Lower lobe of right lung (tissue), 2 donors: ENCODE measurements at regions of chr10 and their contacts with region 1.

Region 1: GRCh38 chr10:3197348-3198003 is 24.9 kb upstream of the PITRM1 start:
- DNase-seq: peak; percentile 80
- ATAC-seq: peak; percentile 91 to 92
- H3K4me3 ChIP-seq: peak overlapping the region; percentile 18
- H3K27ac ChIP-seq: no peak overlapping the region
- H3K4me1 ChIP-seq: peaks cover 21% of the 10 kb centered on the region
- H3K27me3 ChIP-seq: no peaks in the 10 kb centered on the region
- CTCF ChIP-seq: peak; percentile 85

Region 2: GRCh38 chr10:3323865-3324498 is 126.5 kb after region 1 on chr10:
- intact Hi-C with region 1: no loop called
- DNase-seq: no peak
- ATAC-seq: no peak
- H3K4me3 ChIP-seq: no peak overlapping the region
- H3K27ac ChIP-seq: no peak overlapping the region
- H3K4me1 ChIP-seq: peaks cover 5% of the 10 kb centered on the region
- H3K27me3 ChIP-seq: no peaks in the 10 kb centered on the region
- CTCF ChIP-seq: no peak

Region 3: GRCh38 chr10:4767033-4767814 is 1569.7 kb after region 1 on chr10:
- intact Hi-C with region 1: loop called (anchors 10 kb)
- DNase-seq: no peak
- ATAC-seq: peak in 1 of 2 donors; percentile 68
- H3K4me3 ChIP-seq: no peak overlapping the region
- H3K27ac ChIP-seq: no peak overlapping the region
- H3K4me1 ChIP-seq: peaks cover 9% of the 10 kb centered on the region
- H3K27me3 ChIP-seq: no peaks in the 10 kb centered on the region
- CTCF ChIP-seq: peak; percentile 71